ENCODE measurements at regions of chr5 and their contacts with region 1.

Region 1: DNA sequence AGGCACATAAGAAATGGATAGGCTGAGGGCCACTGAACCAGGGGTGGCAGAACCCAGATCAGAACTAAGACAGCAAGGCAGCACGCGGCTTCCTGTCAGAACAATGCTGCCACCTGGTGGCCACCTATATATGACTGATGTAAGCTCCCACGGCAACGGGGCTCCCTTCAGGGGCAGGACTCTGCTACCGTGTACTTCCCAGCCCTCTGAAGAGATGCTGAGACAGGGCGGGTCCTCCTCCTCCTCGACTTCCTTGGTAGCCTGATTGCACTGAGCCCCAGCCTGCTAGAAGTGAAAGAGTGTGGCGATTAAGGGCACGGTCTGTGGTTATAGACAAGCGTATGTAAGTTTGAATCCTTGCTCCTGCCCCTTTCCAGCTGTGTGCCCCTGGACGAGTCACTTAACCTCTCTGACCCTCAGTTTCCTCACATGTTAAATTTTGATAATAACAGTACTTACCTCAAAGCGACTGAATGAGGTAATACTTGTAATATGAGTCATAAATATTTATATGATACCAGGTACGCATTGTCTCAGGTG is 13.3 kb downstream of the RPS14 start:
- DNase-seq: peak; percentile 96
- ATAC-seq: peak; percentile 89
- H3K4me3 Mint-ChIP-seq: no peak overlapping the region
- H3K27ac Mint-ChIP-seq: no peak overlapping the region
- H3K4me1 Mint-ChIP-seq: peaks cover 10% of the 10 kb centered on the region
- H3K27me3 Mint-ChIP-seq: no peaks in the 10 kb centered on the region
- CTCF ChIP-seq: peak; percentile 72

Region 2: GRCh38 chr5:150409638-150410523 is 26.3 kb before region 1 on chr5:
- CTCF ChIA-PET with region 1: interaction called, 25 read pairs
- POLR2A ChIA-PET with region 1: interaction called, 7 read pairs
- DNase-seq: peak; percentile 76
- ATAC-seq: peak; percentile 86
- H3K4me3 Mint-ChIP-seq: peak overlapping the region; percentile 60
- H3K27ac Mint-ChIP-seq: peak overlapping the region; percentile 92
- H3K4me1 Mint-ChIP-seq: peaks cover 39% of the 10 kb centered on the region
- H3K27me3 Mint-ChIP-seq: no peaks in the 10 kb centered on the region
- CTCF ChIP-seq: no peak

Region 3: GRCh38 chr5:150651382-150652226 is 215.4 kb after region 1 on chr5:
- CTCF ChIA-PET with region 1: no interaction called
- POLR2A ChIA-PET with region 1: no interaction called
- DNase-seq: no peak
- ATAC-seq: no peak
- H3K4me3 Mint-ChIP-seq: no peak overlapping the region
- H3K27ac Mint-ChIP-seq: no peak overlapping the region
- H3K4me1 Mint-ChIP-seq: peaks cover 20% of the 10 kb centered on the region
- H3K27me3 Mint-ChIP-seq: no peaks in the 10 kb centered on the region; the same call in 1 of the 2 replicates
- CTCF ChIP-seq: no peak

Measured in WTC11 (cell line).